AG04449 (cell line): ENCODE measurements at regions of chr16 and their contacts with region 1.

Region 1: GRCh38 chr16:6643080-6643686 is 689.5 kb upstream of the RBFOX1 start:
- DNase-seq: peak; percentile 3
- H3K4me3 ChIP-seq: no peak overlapping the region
- CTCF ChIP-seq: peak; percentile 59

Region 2: GRCh38 chr16:5234295-5235050 is 1408.7 kb before region 1 on chr16:
- CTCF ChIA-PET with region 1: interaction called, 42 read pairs
- POLR2A ChIA-PET with region 1: no interaction called
- DNase-seq: no peak
- H3K4me3 ChIP-seq: no peak overlapping the region
- CTCF ChIP-seq: no peak

Region 3: GRCh38 chr16:6016530-6017184 is 626.5 kb before region 1 on chr16:
- CTCF ChIA-PET with region 1: interaction called, 11 read pairs
- POLR2A ChIA-PET with region 1: no interaction called
- DNase-seq: no peak
- H3K4me3 ChIP-seq: no peak overlapping the region
- CTCF ChIP-seq: no peak